Head of caudate nucleus (tissue), 42 donors: ENCODE measurements at regions of chr4 and their contacts with region 1.

Region 1: DNA sequence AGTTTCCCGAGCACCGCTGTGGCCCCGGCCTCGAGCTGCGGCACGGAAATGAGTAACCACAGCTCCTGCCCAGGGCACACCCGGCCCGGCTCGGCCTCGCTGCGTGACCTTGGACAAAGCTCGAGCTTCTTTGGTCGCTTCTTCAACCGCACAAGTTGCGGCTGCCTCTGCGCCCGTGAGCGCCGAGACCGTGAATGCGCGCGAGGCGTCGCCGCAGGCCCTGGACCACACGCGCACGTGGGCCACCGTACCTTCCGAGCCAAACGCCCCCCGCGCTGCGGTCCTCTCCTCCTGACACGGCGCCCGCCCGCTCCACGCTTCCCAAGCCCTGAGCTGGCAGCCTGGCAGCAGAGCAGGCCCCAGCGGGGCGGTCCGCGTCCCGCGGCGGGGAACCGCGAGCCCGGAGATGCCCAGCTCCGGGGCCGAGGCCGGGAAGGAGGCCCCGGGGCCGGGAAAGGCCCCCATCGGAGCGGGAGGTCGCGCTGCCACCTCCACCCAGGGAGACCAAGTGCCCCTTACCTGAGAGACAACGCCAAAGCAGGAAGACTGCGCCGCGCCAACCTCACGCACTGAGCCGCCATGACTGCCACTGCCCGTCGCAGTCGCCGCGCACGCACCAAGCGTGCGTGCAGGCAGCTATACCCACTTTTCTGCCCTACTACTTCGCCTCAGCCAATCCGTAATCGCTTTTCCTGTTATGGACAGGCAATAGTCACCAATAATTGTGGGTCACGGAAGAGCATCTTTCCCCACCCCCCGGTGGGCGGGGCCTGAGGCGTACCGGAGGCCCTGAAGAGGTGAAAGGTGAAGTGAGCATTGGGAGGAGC is at the start of gene GRPEL1:
- DNase-seq: peak in 39 of 42 donors; percentile 33 to 100 (median 99)

Region 2: DNA sequence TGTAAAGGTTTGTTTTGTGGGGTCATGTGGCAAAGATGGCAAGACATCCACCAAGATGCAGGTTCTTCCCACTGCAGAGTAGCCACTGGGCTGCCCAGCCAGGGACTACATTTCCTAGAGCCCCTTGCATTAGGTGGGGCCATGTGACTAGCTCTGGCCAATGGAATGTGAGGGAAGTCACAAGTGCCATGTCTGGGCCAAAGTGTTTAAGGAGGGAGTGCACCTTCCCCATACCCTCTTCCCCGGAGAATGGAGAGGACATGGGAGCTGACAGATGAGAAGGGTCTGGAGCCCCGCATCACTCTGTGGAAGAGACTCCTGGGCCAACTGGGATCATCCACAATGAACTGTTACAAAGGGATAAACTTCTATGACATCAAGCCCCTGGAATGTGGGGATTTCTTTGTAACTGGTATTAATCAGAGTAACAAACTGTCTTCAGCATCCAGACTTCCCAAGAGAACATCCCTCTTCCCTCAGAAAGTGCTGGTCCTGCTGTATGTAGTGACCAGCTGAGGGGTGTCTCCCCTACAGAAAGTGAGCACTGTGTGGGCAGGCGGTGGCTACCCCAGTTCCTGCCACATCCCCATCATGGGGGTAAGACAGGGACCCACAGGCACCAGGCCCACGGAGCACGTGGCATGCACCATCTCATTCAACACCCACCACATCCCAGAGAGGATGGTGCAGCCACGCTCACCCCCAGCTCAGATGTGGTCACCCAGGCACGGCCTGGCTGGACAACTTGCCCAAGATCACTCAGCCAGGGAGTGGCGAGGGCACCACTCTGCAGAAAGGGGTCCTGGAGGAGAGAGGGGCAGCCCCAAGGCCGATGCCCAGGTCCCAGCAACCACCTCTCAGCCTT is 606.1 kb before region 1 on chr4:
- intact Hi-C with region 1: no loop called
- DNase-seq: peak in 23 of 42 donors; percentile 1 to 57 (median 18)

Region 3: GRCh38 chr4:6909073-6909965 is 158.3 kb before region 1 on chr4 and contains the start of gene TBC1D14:
- intact Hi-C with region 1: loop called (anchors 10 kb)
- DNase-seq: peak; percentile 60 to 96 (median 90)